GM10248 (cell line): ENCODE measurements at regions of chr6 and their contacts with region 1.

Region 1: GRCh38 chr6:90940812-90941481 is 354.1 kb upstream of the MAP3K7 start:
- DNase-seq: peak; percentile 46
- CTCF ChIP-seq: peak; percentile 58

Region 2: DNA sequence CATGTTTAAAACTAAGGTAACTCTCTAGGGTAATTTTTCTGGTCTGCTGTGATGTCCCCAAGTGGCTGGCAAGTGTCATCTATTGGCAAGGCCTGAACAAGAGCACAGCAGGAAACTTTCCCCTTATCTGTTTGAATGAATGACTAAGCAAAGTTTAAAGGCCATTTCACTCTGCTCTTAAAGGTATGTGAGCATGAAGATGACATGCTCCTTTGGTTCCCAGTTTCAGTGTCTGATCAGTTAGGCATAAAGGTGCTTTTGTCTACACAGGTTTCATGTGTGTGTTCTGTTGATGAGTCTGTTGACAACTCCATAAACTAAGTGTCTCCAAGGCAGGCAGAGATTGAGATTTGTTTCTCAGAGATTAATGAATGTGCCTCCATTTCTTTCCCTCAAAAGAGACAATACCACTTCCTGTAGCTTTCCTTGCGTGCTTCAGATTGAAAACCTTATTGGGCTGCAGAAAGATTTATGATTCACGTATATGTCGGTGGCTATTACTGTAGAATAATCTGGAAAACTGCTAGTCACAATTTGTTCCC is 438.0 kb before region 1 on chr6:
- CTCF ChIA-PET with region 1: no interaction called
- POLR2A ChIA-PET with region 1: no interaction called
- DNase-seq: no peak
- CTCF ChIP-seq: no peak

Region 3: DNA sequence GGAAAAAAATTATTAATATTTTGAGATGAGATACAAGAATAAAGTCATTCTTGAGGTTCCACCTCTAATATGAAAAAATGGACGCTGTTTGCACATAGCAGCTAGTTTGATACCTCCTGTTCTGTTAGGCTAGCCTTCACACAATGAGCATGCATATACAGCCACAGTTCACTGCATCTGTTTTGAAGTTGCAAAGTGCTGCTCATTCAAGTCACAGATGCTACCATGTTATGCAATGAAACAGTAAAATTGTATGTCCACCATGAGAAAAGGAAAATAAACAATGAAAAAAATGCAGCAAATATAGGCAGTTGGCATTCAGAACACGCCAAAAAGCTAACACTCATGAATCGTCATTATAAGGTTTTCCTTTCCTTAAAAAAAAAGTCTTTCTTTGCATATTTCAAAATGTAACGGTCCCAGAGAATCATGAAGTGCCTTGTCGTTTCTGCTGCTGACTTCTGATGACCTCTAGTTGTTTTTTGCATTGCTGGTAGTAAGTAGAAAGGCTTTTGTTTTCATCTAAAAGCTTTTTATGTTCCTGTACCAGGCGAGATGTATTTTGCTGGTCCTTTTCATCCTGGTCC is 424.8 kb before region 1 on chr6:
- CTCF ChIA-PET with region 1: no interaction called
- POLR2A ChIA-PET with region 1: no interaction called
- DNase-seq: no peak
- CTCF ChIP-seq: no peak

Region 4: GRCh38 chr6:90818163-90818562 is 122.8 kb before region 1 on chr6:
- CTCF ChIA-PET with region 1: no interaction called
- POLR2A ChIA-PET with region 1: no interaction called
- DNase-seq: no peak
- CTCF ChIP-seq: no peak

Region 5: DNA sequence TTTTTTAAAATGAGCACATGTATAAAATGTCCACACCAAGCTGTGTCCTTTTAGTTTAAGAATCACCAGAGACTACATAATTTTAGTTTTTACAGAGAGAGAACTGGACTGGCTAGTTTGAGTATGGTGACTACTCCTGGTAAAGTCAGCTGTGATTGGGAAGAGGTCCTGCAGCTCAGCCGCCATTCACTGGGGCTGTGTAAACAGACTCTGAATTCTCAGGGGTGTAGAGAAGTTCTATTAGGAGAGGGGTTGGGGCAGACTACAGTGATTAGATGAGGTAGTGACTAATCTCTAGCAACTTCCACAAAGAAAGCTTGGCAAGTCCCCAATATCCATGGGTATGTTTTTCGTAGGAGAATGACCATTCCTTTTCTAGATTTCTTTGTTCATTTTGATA is 12.9 kb before region 1 on chr6:
- CTCF ChIA-PET with region 1: interaction called, 24 read pairs
- POLR2A ChIA-PET with region 1: no interaction called
- DNase-seq: no peak
- CTCF ChIP-seq: no peak

Region 6: GRCh38 chr6:90952176-90952575 is 11.2 kb after region 1 on chr6:
- CTCF ChIA-PET with region 1: interaction called, 22 read pairs
- POLR2A ChIA-PET with region 1: no interaction called
- DNase-seq: no peak
- CTCF ChIP-seq: no peak

Region 7: GRCh38 chr6:90978046-90978445 is 37.1 kb after region 1 on chr6:
- CTCF ChIA-PET with region 1: interaction called, 10 read pairs
- POLR2A ChIA-PET with region 1: no interaction called
- DNase-seq: peak; percentile 10
- CTCF ChIP-seq: no peak